ENCODE measurements at regions of chr10 and their contacts with region 1.

Region 1: DNA sequence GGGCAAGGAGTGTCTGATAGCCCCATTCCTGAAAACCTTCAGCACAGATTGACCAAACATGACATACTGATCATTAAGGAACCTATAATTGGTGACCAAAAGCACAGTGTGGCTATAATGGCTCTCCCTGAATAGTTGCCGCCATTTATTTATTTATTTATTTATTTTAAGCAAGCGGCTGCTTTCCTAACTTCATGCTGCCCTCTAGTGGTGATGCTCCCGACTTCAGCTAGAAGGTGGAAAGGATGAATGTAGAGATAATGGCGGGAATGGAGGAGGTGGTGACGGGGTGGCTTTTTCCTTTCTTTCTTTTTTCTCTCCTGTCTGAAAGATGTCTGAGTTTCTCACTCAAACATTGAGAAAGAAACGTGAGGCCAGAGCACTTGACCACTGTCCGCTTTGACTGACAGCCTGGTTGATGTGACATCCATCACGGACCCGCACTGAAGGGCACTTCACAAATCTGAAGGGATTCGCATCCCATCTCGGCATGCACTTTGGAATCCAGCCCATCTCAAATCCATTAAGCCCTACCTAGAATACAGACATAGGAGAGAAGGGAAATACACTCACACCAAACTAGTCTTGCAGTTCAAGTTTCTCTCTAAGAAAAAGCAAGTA is 1090.1 kb downstream of the KCNMA1 start:
- DNase-seq: peak; percentile 74
- ATAC-seq: peak; percentile 67
- H3K4me3 ChIP-seq: no peak overlapping the region
- H3K27ac ChIP-seq: no peak overlapping the region
- H3K4me1 ChIP-seq: no peaks in the 10 kb centered on the region
- H3K27me3 ChIP-seq: no peaks in the 10 kb centered on the region
- CTCF ChIP-seq: peak; percentile 75
- EP300 ChIP-seq: no peak
- POLR2A ChIP-seq: no peak
- RAD21 ChIP-seq: peak; percentile 42; the same call in 1 of the 2 replicates

Region 2: GRCh38 chr10:75408911-75409885 is 1138.3 kb before region 1 on chr10:
- CTCF ChIA-PET with region 1: no interaction called
- POLR2A ChIA-PET with region 1: no interaction called
- in situ Hi-C with region 1: no loop called
- intact Hi-C with region 1: loop called (anchors 5 kb)
- DNase-seq: no peak
- ATAC-seq: peak; percentile 68
- H3K4me3 ChIP-seq: peak overlapping the region; percentile 84 to 91 (median 87)
- H3K27ac ChIP-seq: peak overlapping the region; percentile 86
- H3K4me1 ChIP-seq: peaks cover 20% of the 10 kb centered on the region
- H3K27me3 ChIP-seq: no peaks in the 10 kb centered on the region
- CTCF ChIP-seq: no peak; the same call in 1 of the 2 replicates
- EP300 ChIP-seq: no peak
- POLR2A ChIP-seq: no peak; a peak in 1 of 4 replicates
- RAD21 ChIP-seq: 0 out of 2 replicates have a peak, but pooled peaks have one; percentile 14

Region 3: GRCh38 chr10:76311752-76312636 is 235.5 kb before region 1 on chr10:
- CTCF ChIA-PET with region 1: no interaction called
- POLR2A ChIA-PET with region 1: no interaction called
- in situ Hi-C with region 1: no loop called
- intact Hi-C with region 1: loop called (anchors 10 kb)
- DNase-seq: peak; percentile 52
- ATAC-seq: peak; percentile 100
- H3K4me3 ChIP-seq: no peak overlapping the region
- H3K27ac ChIP-seq: no peak overlapping the region
- H3K4me1 ChIP-seq: no peaks in the 10 kb centered on the region
- H3K27me3 ChIP-seq: no peaks in the 10 kb centered on the region
- CTCF ChIP-seq: peak; percentile 73
- EP300 ChIP-seq: no peak
- POLR2A ChIP-seq: no peak
- RAD21 ChIP-seq: peak; percentile 70

Region 4: DNA sequence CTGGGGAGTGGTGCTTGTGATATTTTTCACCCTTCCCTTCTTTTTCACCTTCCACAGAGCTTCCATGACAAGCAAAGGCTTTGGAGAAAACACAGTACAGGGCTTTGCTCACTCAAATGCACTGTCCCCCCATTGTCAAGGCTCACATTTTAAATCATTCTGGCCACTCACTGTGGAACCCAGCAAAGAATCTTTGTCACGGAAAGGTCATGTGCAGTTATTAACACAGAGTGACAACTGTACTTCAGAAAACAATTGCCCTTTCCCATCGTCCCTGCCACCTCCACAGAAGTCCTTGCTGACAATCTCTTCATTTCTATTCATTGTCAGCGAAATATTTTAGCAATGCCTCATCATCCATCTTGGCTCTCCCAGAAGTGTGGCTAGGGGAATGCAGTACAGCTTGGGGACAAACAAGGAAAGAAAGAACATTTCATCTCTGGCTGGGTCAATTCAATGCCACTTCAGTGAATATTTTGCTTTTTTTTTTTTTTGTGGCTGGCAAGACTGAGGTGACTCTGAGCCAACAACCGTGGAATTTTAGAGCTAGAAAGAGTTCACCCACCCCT is 239.1 kb after region 1 on chr10:
- CTCF ChIA-PET with region 1: no interaction called
- POLR2A ChIA-PET with region 1: no interaction called
- in situ Hi-C with region 1: no loop called
- intact Hi-C with region 1: no loop called
- DNase-seq: no peak
- ATAC-seq: no peak
- H3K4me3 ChIP-seq: no peak overlapping the region
- H3K27ac ChIP-seq: no peak overlapping the region
- H3K4me1 ChIP-seq: no peaks in the 10 kb centered on the region
- H3K27me3 ChIP-seq: no peaks in the 10 kb centered on the region
- CTCF ChIP-seq: no peak
- EP300 ChIP-seq: no peak
- POLR2A ChIP-seq: no peak
- RAD21 ChIP-seq: no peak

Region 5: DNA sequence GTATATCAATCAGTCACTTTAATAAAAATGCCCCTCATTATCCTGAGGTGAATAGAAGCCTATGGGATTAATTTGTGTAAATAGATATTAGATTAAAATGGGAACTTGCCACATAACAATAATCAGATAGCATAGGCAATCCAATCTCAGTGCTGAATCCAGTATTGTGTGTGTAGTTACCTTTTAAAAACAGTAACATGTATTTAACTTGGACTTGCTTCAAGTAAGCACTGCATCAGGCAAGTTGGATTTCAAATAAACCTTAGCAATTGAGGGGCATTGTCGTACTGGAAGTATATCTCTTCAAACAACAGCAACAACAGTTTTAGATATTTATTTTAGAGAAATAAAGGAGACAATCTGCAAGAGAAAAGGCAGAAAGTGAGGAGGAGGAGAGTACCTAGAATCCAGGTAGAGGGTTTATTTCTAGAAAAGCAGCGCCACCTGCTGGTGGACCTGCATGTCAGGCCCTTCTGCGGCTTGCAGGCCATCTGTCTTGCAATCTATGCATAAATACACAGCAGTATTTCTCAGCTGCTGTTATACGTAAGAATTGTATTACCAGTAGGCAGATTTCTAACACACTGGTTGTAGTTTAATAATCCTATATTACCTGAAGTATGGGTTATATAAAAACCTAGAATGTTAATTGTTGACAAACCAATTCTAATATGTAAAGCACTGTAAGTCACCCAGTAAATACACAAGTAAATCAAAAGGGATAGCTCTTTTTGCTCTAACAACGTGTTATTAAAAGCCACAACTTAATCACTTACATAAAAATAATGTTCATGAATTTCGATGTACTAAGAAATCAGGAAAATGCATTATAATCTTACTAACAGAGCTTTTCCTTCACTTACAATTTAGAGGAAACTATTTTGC is 437.3 kb after region 1 on chr10:
- CTCF ChIA-PET with region 1: no interaction called
- POLR2A ChIA-PET with region 1: no interaction called
- in situ Hi-C with region 1: no loop called
- intact Hi-C with region 1: loop called (anchors 5 kb)
- DNase-seq: peak; percentile 49
- ATAC-seq: peak; percentile 89
- H3K4me3 ChIP-seq: no peak overlapping the region
- H3K27ac ChIP-seq: no peak overlapping the region
- H3K4me1 ChIP-seq: no peaks in the 10 kb centered on the region
- H3K27me3 ChIP-seq: peaks cover 0 to 21% of the 10 kb centered on the region in 2 experiments; a peak in 3 of 5 replicates
- CTCF ChIP-seq: peak; percentile 81
- EP300 ChIP-seq: no peak
- POLR2A ChIP-seq: no peak
- RAD21 ChIP-seq: no peak; the same call in 1 of the 2 replicates